ENCODE measurements at regions of chr1 and their contacts with region 1.

Region 1: GRCh38 chr1:36369061-36369861 is 16.5 kb downstream of the STK40 start:
- DNase-seq: peak; percentile 20 to 63
- ATAC-seq: peak; percentile 13 to 32
- H3K4me3 ChIP-seq: no peak overlapping the region
- H3K27ac ChIP-seq: peak overlapping the region in 2 of 4 donors; percentile 28 to 31
- H3K4me1 ChIP-seq: peaks cover 47 to 68% of the 10 kb centered on the region in 2 donors
- H3K27me3 ChIP-seq: no peaks in the 10 kb centered on the region
- CTCF ChIP-seq: peak; percentile 85 to 95 (median 93)
- POLR2A ChIP-seq: no peak

Region 2: GRCh38 chr1:36306902-36307456 is 62.3 kb before region 1 on chr1:
- in situ Hi-C with region 1: no loop called
- intact Hi-C with region 1: no loop called
- DNase-seq: peak; percentile 72 to 84
- ATAC-seq: peak; percentile 79 to 82
- H3K4me3 ChIP-seq: peak overlapping the region; percentile 65 to 87 (median 75)
- H3K27ac ChIP-seq: peak overlapping the region; percentile 74 to 79 (median 77)
- H3K4me1 ChIP-seq: peaks cover 8 to 15% of the 10 kb centered on the region in 2 donors
- H3K27me3 ChIP-seq: no peaks in the 10 kb centered on the region
- CTCF ChIP-seq: no peak
- POLR2A ChIP-seq: peak; percentile 50 to 61

Region 3: DNA sequence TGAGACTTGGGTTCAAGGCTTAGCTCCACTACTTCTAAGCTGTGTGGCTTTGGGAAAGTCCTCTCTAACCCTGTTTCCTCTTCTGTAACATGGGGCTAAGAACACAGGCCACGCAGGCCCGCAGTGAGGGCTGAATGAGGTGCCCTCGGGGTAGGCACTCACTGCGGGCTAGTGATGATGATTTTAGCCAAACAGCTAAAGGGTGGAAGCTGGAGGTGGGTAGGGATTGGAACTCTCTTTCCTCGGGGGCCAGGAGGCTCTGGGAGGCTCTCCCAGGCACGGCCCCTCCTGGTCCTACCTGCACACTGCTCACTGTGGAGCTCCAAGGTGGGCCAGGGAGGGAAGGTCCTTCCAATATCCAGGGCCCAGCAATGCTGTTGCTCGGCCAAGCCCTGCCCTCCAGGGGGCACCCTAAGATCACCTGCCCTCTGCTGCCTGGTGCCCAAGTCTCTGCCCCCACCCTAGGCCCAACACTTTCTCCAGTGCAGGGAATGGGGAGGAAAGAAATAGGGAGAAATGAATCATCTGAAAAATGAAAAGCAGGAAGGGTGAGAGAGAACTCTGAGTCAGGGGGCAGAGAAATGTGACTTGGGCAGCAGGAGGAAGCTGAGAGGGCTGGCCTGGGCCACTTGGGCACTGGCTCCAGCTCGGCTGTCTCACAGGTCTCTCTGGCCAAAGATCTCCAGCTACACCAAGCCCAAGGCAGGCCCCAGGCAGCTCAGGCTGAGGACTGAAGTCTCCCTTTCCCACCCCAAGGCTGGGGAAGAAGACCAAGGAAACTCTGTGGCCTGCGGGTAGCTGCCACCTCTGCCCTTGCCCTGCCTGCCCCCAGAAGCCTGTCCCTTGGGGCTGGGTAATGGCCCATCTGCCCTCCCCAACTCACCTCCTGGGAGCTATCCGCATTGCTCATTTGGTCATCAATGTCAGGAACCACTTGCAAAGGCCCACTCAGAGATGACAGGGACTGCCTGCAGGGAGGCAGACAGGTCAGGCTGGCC is 26.5 kb before region 1 on chr1:
- in situ Hi-C with region 1: no loop called
- intact Hi-C with region 1: loop called (anchors 1 kb)
- DNase-seq: no peak
- ATAC-seq: peak in 1 of 2 donors; percentile 8
- H3K4me3 ChIP-seq: no peak overlapping the region
- H3K27ac ChIP-seq: peak overlapping the region; percentile 75 to 82 (median 78)
- H3K4me1 ChIP-seq: peaks cover 23 to 27% of the 10 kb centered on the region in 2 donors
- H3K27me3 ChIP-seq: no peaks in the 10 kb centered on the region
- CTCF ChIP-seq: peak; percentile 32 to 77 (median 72)
- POLR2A ChIP-seq: no peak